ENCODE measurements at regions of chr14 and their contacts with region 1.

Region 1: GRCh38 chr14:76956316-76957090 is 72.0 kb downstream of the IRF2BPL start:
- DNase-seq: peak; percentile 92 to 99
- H3K4me3 ChIP-seq: peak overlapping the region; percentile 48; the same call in 1 of the 2 replicates
- H3K27ac ChIP-seq: peak overlapping the region; percentile 90
- H3K4me1 ChIP-seq: peaks cover 98% of the 10 kb centered on the region
- H3K27me3 ChIP-seq: no peaks in the 10 kb centered on the region
- CTCF ChIP-seq: no peak; the same call in 1 of the 2 replicates

Region 2: DNA sequence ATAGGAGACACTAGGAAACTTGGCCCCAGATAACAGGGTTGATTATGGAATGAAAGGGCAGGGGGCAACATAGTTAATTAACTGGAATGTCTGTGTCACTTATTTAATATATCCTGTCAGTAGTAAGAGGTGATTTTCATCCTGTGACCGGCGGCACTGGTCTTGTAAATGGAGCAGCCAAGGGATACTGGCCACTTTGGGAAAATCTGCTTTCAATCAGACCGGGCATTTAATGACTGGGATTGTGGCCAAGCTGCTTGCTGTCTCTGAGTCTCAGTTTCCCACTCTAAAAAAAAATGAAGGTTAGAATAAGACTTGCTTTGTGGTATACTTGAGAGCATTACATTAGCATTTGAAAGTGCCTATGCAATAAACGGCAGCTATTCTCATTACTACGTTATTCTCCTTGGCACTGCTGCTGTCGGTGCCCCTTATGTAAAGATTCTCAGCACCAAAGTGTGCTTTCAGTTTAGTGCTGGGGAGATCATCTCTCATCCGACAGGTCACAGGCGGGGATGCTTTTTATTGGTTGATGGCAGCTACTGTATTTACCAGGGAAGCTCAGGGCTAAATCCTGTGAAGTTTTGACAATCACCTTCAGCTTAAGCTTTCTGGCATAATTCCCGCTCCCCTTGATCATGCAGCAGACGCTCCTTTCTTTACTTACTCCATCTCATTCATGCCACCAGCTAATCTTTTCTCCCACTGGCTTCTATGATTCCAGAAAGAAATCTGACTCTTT is 418.4 kb before region 1 on chr14:
- CTCF ChIA-PET with region 1: no interaction called
- POLR2A ChIA-PET with region 1: no interaction called
- intact Hi-C with region 1: no loop called
- DNase-seq: no peak
- H3K4me3 ChIP-seq: no peak overlapping the region
- H3K27ac ChIP-seq: no peak overlapping the region
- H3K4me1 ChIP-seq: no peaks in the 10 kb centered on the region
- H3K27me3 ChIP-seq: peaks cover 88% of the 10 kb centered on the region
- CTCF ChIP-seq: no peak

Region 3: GRCh38 chr14:76904740-76905438 is 51.6 kb before region 1 on chr14:
- CTCF ChIA-PET with region 1: interaction called, 10 read pairs
- POLR2A ChIA-PET with region 1: no interaction called
- intact Hi-C with region 1: no loop called
- DNase-seq: peak; percentile 98 to 100
- H3K4me3 ChIP-seq: peak overlapping the region; percentile 9; the same call in 1 of the 2 replicates
- H3K27ac ChIP-seq: peak overlapping the region; percentile 80
- H3K4me1 ChIP-seq: peaks cover 34% of the 10 kb centered on the region
- H3K27me3 ChIP-seq: no peaks in the 10 kb centered on the region
- CTCF ChIP-seq: no peak

Region 4: DNA sequence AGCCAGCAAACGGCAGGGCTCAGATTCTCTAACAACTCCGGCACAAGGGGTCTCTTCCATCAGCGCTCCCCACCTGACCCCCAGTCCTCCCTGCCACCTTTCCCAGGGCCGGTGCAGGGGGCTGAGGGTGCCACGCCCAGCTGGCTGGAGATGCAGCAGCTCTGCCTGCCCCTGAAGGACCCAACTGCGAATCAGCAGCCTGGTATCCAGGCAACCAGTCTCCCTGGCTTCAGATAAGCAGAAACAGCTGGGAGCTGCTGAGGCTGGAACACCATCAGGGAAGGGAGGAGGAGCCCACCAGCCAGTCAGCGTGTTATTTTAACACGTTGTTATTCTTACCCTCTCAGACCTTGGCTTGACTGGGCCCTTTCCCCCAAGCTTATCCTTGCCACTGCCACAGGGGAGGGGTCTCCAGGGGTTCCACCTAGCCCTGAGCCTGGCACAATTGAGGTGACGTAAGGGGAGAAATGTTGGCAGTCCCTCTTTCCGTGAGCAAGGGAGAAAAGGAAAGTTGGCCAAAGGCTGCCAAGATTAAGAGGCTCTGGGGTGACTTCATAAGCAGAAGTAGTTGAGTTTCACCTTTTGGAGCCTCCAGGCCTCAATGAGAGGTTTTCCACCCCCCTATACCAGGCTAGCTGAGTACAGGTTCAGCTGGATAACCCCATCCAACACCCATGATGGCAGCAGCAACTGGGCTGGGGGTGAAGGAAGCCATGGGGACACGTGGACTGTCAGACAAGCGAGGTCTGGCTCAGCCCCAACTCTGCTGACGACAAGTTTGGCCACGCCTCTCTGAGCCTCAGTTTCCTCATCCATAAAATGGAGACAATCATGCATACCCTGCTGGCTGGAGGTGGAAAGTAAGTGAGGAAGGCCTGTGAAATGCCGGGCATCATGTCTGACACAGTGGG is 19.1 kb before region 1 on chr14:
- CTCF ChIA-PET with region 1: interaction called, 3 read pairs
- POLR2A ChIA-PET with region 1: interaction called, 16 read pairs
- intact Hi-C with region 1: no loop called
- DNase-seq: peak in 1 of 2 experiments; percentile 48
- H3K4me3 ChIP-seq: no peak overlapping the region
- H3K27ac ChIP-seq: no peak overlapping the region
- H3K4me1 ChIP-seq: no peaks in the 10 kb centered on the region
- H3K27me3 ChIP-seq: no peaks in the 10 kb centered on the region
- CTCF ChIP-seq: no peak

Region 5: GRCh38 chr14:77014004-77014604 is 57.6 kb after region 1 on chr14:
- CTCF ChIA-PET with region 1: interaction called, 6 read pairs
- POLR2A ChIA-PET with region 1: interaction called, 14 read pairs
- intact Hi-C with region 1: loop called (anchors 2 kb)
- DNase-seq: peak; percentile 42 to 85
- H3K4me3 ChIP-seq: no peak overlapping the region
- H3K27ac ChIP-seq: no peak overlapping the region
- H3K4me1 ChIP-seq: peaks cover 40% of the 10 kb centered on the region
- H3K27me3 ChIP-seq: no peaks in the 10 kb centered on the region
- CTCF ChIP-seq: no peak

Region 6: GRCh38 chr14:77033622-77034521 is 77.4 kb after region 1 on chr14:
- CTCF ChIA-PET with region 1: interaction called, 12 read pairs
- POLR2A ChIA-PET with region 1: interaction called, 14 read pairs
- intact Hi-C with region 1: no loop called
- DNase-seq: peak; percentile 94
- H3K4me3 ChIP-seq: peak overlapping the region; percentile 56
- H3K27ac ChIP-seq: peak overlapping the region; percentile 93
- H3K4me1 ChIP-seq: peaks cover 92% of the 10 kb centered on the region
- H3K27me3 ChIP-seq: no peaks in the 10 kb centered on the region
- CTCF ChIP-seq: peak; percentile 17; the same call in 1 of the 2 replicates

Region 7: GRCh38 chr14:77086017-77086736 is 129.7 kb after region 1 on chr14:
- CTCF ChIA-PET with region 1: no interaction called
- POLR2A ChIA-PET with region 1: interaction called, 8 read pairs
- intact Hi-C with region 1: loop called (anchors 1 kb)
- DNase-seq: peak; percentile 58 to 86
- H3K4me3 ChIP-seq: no peak overlapping the region
- H3K27ac ChIP-seq: no peak overlapping the region
- H3K4me1 ChIP-seq: peaks cover 38% of the 10 kb centered on the region
- H3K27me3 ChIP-seq: no peaks in the 10 kb centered on the region
- CTCF ChIP-seq: no peak

Region 8: DNA sequence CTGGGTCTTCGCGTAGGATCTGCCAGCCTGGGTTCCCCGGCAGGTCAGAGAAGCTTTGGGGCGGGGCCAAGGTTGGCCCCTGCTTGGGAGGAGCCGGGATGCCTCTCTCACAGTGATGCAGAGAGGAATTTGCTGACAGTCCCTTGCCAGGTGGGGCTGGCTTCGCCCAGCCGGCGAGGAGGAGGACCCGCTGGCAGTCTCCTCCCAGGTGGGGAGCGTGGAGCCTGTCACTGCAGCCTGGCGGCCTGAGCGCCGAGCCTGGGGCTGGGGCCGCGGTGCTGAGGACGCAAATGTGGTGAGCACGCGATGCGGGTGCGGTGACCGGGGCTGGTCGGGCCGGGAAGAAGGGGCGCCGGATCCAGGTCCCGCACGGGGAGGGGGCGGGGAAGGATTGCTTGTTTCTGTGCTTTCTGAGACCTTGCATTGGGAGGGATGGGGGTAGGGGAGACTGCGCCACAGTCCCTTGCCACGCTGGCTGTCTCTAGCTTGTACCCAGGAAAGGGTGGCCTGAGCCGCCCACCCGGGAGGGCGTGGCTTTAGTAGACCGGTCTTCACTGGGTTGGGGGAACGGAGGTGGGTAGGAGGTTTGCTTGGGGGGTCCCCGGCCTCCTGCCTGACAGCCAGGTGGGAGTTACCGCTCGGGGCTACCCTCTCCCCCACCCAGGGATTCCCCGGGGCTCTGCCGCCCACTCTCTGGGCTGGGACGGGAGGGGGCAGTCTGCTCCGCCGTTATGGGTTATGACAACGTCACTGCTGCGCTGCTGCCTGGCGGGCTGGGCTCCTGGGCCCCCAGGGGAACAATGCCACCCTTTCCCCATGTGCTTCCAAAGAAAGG is 225.3 kb after region 1 on chr14 and contains the start of gene TMEM63C:
- CTCF ChIA-PET with region 1: no interaction called
- POLR2A ChIA-PET with region 1: interaction called, 12 read pairs
- intact Hi-C with region 1: no loop called
- DNase-seq: peak; percentile 66 to 92
- H3K4me3 ChIP-seq: peak within 1 kb of the TSS; percentile 50; the same call in 1 of the 2 replicates
- H3K27ac ChIP-seq: no peak within 1 kb of the TSS
- H3K4me1 ChIP-seq: no peaks in the 10 kb centered on the region
- H3K27me3 ChIP-seq: peaks cover 72% of the 10 kb centered on the region
- CTCF ChIP-seq: no peak
- total RNA-seq, gene TMEM63C: 2.1 and 2.2 TPM in 2 replicates

Measured in PC-9 (cell line).